ENCODE measurements at regions of chr7 and their contacts with region 1.

Region 1: GRCh38 chr7:95608359-95609173 is 12.2 kb upstream of the PDK4 start:
- DNase-seq: peak; percentile 83 to 93
- H3K4me3 ChIP-seq: peak overlapping the region; percentile 1 to 53 (median 12)
- H3K27ac ChIP-seq: peak overlapping the region; percentile 82 to 96
- H3K4me1 ChIP-seq: peaks cover 0 to 6% of the 10 kb centered on the region in 2 donors
- H3K27me3 ChIP-seq: no peaks in the 10 kb centered on the region
- CTCF ChIP-seq: no peak
- POLR2A ChIP-seq: peak; percentile 57

Region 2: DNA sequence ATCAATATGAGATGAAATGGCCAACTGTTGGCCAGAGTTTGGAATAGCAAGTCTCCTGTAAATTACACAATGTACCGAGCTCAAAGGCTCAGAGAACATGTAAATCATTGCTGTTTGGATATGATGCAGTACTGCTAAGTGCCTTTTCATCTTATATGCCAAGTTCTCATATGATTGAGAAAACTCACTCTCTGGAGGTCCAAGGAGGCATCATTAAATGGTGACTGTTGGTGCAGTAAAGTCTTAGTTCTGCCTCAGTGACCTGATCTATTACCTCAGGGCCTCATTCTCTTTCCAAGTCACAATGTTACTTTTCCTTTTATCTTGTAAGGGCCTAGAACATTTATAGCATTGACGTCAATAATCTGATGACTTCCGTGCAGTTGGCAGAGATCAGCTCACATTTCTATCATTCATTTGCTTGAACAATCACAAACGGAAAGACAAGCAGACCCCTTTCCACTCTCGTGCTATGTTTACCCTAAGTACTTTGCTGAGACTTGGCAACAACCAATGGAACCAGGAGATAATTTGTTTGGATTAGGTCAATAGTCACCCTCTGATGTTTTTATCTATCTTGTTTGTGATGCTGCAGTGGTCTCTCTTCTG is 20.4 kb after region 1 on chr7:
- intact Hi-C with region 1: loop called (anchors 1 kb)
- DNase-seq: no peak
- H3K4me3 ChIP-seq: no peak overlapping the region
- H3K27ac ChIP-seq: no peak overlapping the region
- H3K4me1 ChIP-seq: no peaks in the 10 kb centered on the region
- H3K27me3 ChIP-seq: no peaks in the 10 kb centered on the region
- CTCF ChIP-seq: peak in 1 of 3 donors; percentile 21
- POLR2A ChIP-seq: no peak

Region 3: GRCh38 chr7:95690367-95690947 is 81.9 kb after region 1 on chr7:
- intact Hi-C with region 1: no loop called
- DNase-seq: no peak
- H3K4me3 ChIP-seq: peak overlapping the region in 1 of 3 donors; percentile 30
- H3K27ac ChIP-seq: no peak overlapping the region
- H3K4me1 ChIP-seq: no peaks in the 10 kb centered on the region
- H3K27me3 ChIP-seq: no peaks in the 10 kb centered on the region
- CTCF ChIP-seq: peak; percentile 27 to 84 (median 72)
- POLR2A ChIP-seq: no peak